ENCODE measurements at regions of chr10 and their contacts with region 1.

Region 1: DNA sequence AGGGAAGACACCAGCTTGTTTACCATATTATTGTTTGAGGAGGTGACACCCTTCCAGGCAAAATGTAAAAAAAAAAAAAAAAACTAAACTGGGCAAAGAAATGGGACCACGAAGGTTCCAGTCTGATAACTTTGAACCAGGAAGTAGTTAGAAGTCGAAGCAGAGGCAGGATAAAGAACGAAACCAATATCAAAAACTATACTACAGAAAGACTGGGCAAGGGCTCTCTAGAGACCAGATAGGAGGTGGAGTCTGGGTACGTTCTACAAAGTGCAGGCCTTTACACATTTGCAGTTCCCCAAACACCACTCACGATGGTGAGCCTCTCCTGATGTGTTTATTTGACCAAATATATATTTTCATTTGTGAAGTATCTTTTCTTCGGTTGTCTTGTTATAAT is 125.7 kb upstream of the CDK1 start:
- DNase-seq: no peak
- H3K4me3 ChIP-seq: no peak overlapping the region
- H3K27ac ChIP-seq: no peak overlapping the region
- H3K4me1 ChIP-seq: no peaks in the 10 kb centered on the region
- H3K27me3 ChIP-seq: no peaks in the 10 kb centered on the region

Region 2: GRCh38 chr10:60434418-60435046 is 218.1 kb before region 1 on chr10:
- in situ Hi-C with region 1: no loop called
- DNase-seq: peak; percentile 76
- H3K4me3 ChIP-seq: no peak overlapping the region
- H3K27ac ChIP-seq: peak overlapping the region; percentile 12; the same call in 1 of the 2 replicates
- H3K4me1 ChIP-seq: peaks cover 28% of the 10 kb centered on the region
- H3K27me3 ChIP-seq: no peaks in the 10 kb centered on the region

Region 3: GRCh38 chr10:60444494-60445064 is 208.0 kb before region 1 on chr10:
- in situ Hi-C with region 1: loop called (anchors 5 kb)
- DNase-seq: peak; percentile 52
- H3K4me3 ChIP-seq: no peak overlapping the region
- H3K27ac ChIP-seq: no peak overlapping the region
- H3K4me1 ChIP-seq: peaks cover 20% of the 10 kb centered on the region
- H3K27me3 ChIP-seq: no peaks in the 10 kb centered on the region

Region 4: GRCh38 chr10:61363006-61363405 is 710.4 kb after region 1 on chr10:
- in situ Hi-C with region 1: no loop called
- DNase-seq: no peak
- H3K4me3 ChIP-seq: no peak overlapping the region
- H3K27ac ChIP-seq: no peak overlapping the region
- H3K4me1 ChIP-seq: no peaks in the 10 kb centered on the region
- H3K27me3 ChIP-seq: no peaks in the 10 kb centered on the region; the same call in 1 of the 2 replicates

Measured in GM23248 (cell line).